Endothelial cell of umbilical vein (primary cell): ENCODE measurements at regions of chr3 and their contacts with region 1.

Region 1: DNA sequence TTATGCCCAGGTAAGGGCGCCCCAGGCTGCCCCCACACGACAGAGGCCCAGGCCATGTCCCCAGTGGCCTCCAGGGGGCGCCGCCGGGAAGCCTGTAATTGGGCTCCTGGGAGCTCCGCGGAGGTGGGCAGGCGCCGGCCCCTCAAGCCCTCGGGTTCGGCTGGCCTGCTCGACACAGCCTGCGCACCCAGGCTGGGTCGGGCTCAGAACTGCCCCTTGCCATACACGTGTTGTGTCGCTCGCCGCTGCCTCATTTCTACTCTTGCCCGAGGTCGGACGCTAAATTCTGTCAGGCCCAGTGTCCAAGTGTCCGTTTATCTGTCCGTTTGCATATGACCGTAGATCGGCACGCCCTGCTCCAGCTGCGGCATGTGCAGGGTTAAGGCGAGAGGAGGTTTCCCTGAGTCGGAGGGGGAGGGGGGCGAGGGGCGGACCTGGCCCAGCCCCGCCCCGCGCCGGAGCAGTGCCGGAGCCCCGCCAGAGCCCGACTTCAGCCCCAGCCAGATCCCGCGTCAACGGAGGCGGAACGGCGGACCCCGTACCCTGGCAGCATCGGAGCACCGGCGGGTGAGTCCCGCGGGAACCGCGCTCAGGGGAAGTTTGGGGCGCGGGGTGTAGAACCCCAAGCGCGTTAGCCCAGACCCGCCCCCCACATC is at the start of gene KLHDC8B:
- DNase-seq: peak; percentile 95
- H3K4me3 ChIP-seq: peak within 1 kb of the TSS; percentile 44 to 94 (median 71)
- H3K27ac ChIP-seq: peak within 1 kb of the TSS; percentile 24
- H3K4me1 ChIP-seq: peaks cover 25% of the 10 kb centered on the region
- H3K27me3 ChIP-seq: no peaks in the 10 kb centered on the region
- CTCF ChIP-seq: peak; percentile 93 to 99
- POLR2A ChIP-seq: peak; percentile 69
- total RNA-seq, gene KLHDC8B: 22.9 and 36.0 TPM in 2 replicates

Region 2: GRCh38 chr3:49133226-49133951 is 37.9 kb before region 1 on chr3:
- CTCF ChIA-PET with region 1: interaction called, 16 read pairs
- POLR2A ChIA-PET with region 1: interaction called, 3 read pairs
- dilution Hi-C with region 1: no loop called
- intact Hi-C with region 1: loop called (anchors 2 kb)
- DNase-seq: peak; percentile 92
- H3K4me3 ChIP-seq: peak overlapping the region; percentile 58 to 89 (median 83)
- H3K27ac ChIP-seq: peak overlapping the region; percentile 58
- H3K4me1 ChIP-seq: peaks cover 14% of the 10 kb centered on the region
- H3K27me3 ChIP-seq: no peaks in the 10 kb centered on the region
- CTCF ChIP-seq: no peak
- POLR2A ChIP-seq: peak; percentile 76

Region 3: GRCh38 chr3:49266410-49267095 is 95.3 kb after region 1 on chr3:
- CTCF ChIA-PET with region 1: interaction called, 10 read pairs
- POLR2A ChIA-PET with region 1: no interaction called
- dilution Hi-C with region 1: no loop called
- intact Hi-C with region 1: no loop called
- DNase-seq: no peak
- H3K4me3 ChIP-seq: no peak overlapping the region
- H3K27ac ChIP-seq: no peak overlapping the region
- H3K4me1 ChIP-seq: no peaks in the 10 kb centered on the region
- H3K27me3 ChIP-seq: no peaks in the 10 kb centered on the region
- CTCF ChIP-seq: no peak
- POLR2A ChIP-seq: no peak

Region 4: GRCh38 chr3:49295489-49296058 is 124.3 kb after region 1 on chr3:
- CTCF ChIA-PET with region 1: interaction called, 15 read pairs
- POLR2A ChIA-PET with region 1: no interaction called
- dilution Hi-C with region 1: no loop called
- intact Hi-C with region 1: loop called (anchors 1 kb)
- DNase-seq: peak; percentile 55
- H3K4me3 ChIP-seq: no peak overlapping the region
- H3K27ac ChIP-seq: no peak overlapping the region
- H3K4me1 ChIP-seq: peaks cover 8% of the 10 kb centered on the region
- H3K27me3 ChIP-seq: no peaks in the 10 kb centered on the region
- CTCF ChIP-seq: peak; percentile 50 to 52
- POLR2A ChIP-seq: no peak

Region 5: DNA sequence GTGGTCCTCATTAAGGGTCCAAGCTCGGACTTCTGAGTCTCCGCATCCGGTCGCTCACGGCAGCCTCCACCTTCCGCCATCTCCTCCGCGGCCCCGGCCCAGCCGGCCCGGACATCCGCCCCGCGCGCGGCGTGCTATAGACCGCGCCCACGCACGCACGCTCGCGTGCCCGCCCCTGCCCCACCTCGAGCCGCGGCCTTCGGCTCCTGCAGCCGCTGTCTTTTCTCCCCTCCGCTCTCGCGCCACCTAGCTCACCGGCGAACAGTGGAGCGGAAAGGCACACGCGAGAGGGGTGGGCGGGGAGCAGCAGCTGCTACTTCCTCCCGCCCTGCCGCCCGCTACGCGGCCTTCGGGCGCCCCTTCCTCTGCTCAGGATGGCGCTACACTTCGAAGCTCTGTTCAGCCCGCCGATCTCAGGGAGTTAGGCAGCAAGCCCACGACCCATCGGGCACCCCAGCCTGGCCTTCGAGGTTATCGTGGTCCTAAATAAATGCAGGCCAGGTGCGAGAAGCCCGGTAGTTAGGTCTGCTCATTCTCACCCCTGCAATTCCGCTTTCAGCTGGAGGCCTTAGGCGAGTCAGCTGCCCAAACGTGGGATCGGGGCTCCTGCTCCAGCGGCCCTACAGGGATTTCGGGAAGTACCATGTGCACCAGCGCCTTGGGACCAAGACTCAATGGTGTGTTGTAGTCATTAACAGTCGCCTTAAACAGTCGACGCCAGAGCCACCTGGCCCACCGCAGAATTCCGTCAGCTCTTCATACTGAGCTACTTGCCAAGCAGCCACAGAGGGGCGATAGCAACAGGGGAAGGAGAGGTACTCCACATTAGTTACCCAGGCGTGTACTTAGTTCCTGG is 168.9 kb after region 1 on chr3 and contains the start of gene USP4:
- CTCF ChIA-PET with region 1: interaction called, 16 read pairs
- POLR2A ChIA-PET with region 1: no interaction called
- dilution Hi-C with region 1: no loop called
- intact Hi-C with region 1: loop called (anchors 1 kb)
- DNase-seq: peak; percentile 91
- H3K4me3 ChIP-seq: peak within 1 kb of the TSS; percentile 65 to 75 (median 75)
- H3K27ac ChIP-seq: peak within 1 kb of the TSS; percentile 80
- H3K4me1 ChIP-seq: peaks cover 28% of the 10 kb centered on the region
- H3K27me3 ChIP-seq: no peaks in the 10 kb centered on the region
- CTCF ChIP-seq: peak; percentile 45 to 52
- POLR2A ChIP-seq: peak; percentile 87
- total RNA-seq, gene USP4: 61.3 and 63.0 TPM in 2 replicates